Thyroid gland (tissue), 4 donors: ENCODE measurements at regions of chr3 and their contacts with region 1.

Region 1: GRCh38 chr3:15557511-15557946 is 36.0 kb upstream of the COLQ start:
- DNase-seq: peak; percentile 68 to 71
- H3K4me3 ChIP-seq: no peak overlapping the region
- H3K27ac ChIP-seq: peak overlapping the region; percentile 70 to 87 (median 83)
- H3K4me1 ChIP-seq: peaks cover 15 to 20% of the 10 kb centered on the region in 2 donors
- H3K27me3 ChIP-seq: no peaks in the 10 kb centered on the region
- CTCF ChIP-seq: peak; percentile 40 to 85 (median 66)
- POLR2A ChIP-seq: peak in 1 of 2 donors; percentile 47

Region 2: DNA sequence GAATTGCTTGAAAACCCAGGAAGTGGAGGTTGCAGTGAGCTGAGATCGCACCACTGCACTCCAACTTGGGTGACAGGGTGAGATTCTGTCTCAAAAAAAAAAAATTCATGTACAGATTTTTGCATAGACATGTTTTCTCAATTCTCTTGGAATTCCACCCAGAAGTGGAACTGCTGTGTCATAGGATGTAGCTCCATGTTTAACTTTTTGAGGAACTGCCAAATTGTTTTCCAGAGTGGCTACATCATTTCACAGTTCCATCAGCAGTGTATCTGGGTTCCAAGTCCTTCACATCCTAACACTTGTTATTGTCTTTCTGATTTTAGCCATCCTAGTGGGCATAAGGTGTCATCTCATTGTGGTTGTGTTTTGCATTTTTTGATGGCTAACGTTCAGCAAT is 341.5 kb before region 1 on chr3:
- intact Hi-C with region 1: loop called (anchors 10 kb)
- DNase-seq: no peak
- H3K4me3 ChIP-seq: no peak overlapping the region
- H3K27ac ChIP-seq: no peak overlapping the region
- H3K4me1 ChIP-seq: peaks cover 4 to 6% of the 10 kb centered on the region in 2 donors
- H3K27me3 ChIP-seq: no peaks in the 10 kb centered on the region
- CTCF ChIP-seq: no peak
- POLR2A ChIP-seq: no peak

Region 3: GRCh38 chr3:15427182-15427880 is 130.2 kb before region 1 on chr3 and contains the starts of genes EAF1 and METTL6:
- intact Hi-C with region 1: loop called (anchors 5 kb)
- DNase-seq: peak; percentile 84 to 86
- H3K4me3 ChIP-seq: peak within 1 kb of the TSS; percentile 71 to 98 (median 82)
- H3K27ac ChIP-seq: peak within 1 kb of the TSS in 2 of 3 donors; percentile 62 to 78
- H3K4me1 ChIP-seq: peaks cover 17 to 21% of the 10 kb centered on the region in 2 donors
- H3K27me3 ChIP-seq: no peaks in the 10 kb centered on the region
- CTCF ChIP-seq: peak in 2 of 6 experiments; percentile 13 to 27
- POLR2A ChIP-seq: peak in 1 of 2 donors; percentile 35
- total RNA-seq, gene EAF1: 15.2 to 24.7 (median 22.3) TPM
- total RNA-seq, gene METTL6: 20.2 to 20.8 (median 20.5) TPM

Region 4: DNA sequence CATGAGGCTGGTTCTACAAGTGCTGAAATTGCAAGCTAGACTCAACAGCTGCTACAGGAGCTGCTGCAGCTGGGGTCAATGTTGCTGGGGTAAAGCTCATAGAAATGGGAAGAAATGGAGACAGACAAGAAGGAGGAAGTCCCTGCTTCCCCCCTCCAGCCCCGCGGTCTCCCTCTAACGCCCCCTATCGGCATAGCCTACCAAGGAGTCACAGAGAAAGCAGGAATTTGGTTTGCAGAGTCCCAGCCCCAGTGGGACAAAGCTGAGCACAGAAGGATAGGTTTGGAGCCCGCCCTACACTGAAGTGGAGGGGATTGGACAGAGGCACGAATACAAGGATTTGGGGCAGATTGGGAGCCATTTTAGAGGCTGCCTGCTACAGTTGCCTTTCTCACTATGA is 417.1 kb after region 1 on chr3:
- intact Hi-C with region 1: no loop called
- DNase-seq: no peak
- H3K4me3 ChIP-seq: no peak overlapping the region
- H3K27ac ChIP-seq: no peak overlapping the region
- H3K4me1 ChIP-seq: peaks cover 0 to 7% of the 10 kb centered on the region in 2 donors
- H3K27me3 ChIP-seq: no peaks in the 10 kb centered on the region
- CTCF ChIP-seq: no peak
- POLR2A ChIP-seq: no peak